Colonic mucosa (tissue), 4 donors: ENCODE measurements at regions of chr4 and their contacts with region 1.

Region 1: DNA sequence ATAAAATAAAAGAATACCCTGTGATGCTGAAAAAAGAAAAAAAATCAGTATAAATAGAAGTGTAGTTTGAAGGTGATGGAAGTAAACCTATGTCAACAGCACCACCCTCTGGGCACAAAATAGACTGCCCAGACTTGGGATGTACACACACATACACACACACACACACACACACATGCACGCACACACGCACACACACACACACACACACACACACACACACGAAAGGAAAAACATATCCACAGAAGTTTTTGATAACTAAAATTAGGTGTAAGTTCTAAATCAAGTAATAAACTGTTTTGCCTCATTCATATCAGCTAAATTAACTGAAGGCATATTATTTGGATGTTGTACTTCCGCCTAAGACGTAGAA is 40.5 kb downstream of the ANXA5 start:
- DNase-seq: no peak
- H3K4me3 ChIP-seq: no peak overlapping the region
- H3K27ac ChIP-seq: no peak overlapping the region
- H3K4me1 ChIP-seq: no peaks in the 10 kb centered on the region
- H3K27me3 ChIP-seq: no peaks in the 10 kb centered on the region
- CTCF ChIP-seq: no peak

Region 2: GRCh38 chr4:121370729-121371325 is 285.4 kb before region 1 on chr4:
- intact Hi-C with region 1: loop called (anchors 5 kb)
- DNase-seq: peak; percentile 32
- H3K4me3 ChIP-seq: no peak overlapping the region
- H3K27ac ChIP-seq: no peak overlapping the region
- H3K4me1 ChIP-seq: no peaks in the 10 kb centered on the region
- H3K27me3 ChIP-seq: no peaks in the 10 kb centered on the region
- CTCF ChIP-seq: peak; percentile 53

Region 3: DNA sequence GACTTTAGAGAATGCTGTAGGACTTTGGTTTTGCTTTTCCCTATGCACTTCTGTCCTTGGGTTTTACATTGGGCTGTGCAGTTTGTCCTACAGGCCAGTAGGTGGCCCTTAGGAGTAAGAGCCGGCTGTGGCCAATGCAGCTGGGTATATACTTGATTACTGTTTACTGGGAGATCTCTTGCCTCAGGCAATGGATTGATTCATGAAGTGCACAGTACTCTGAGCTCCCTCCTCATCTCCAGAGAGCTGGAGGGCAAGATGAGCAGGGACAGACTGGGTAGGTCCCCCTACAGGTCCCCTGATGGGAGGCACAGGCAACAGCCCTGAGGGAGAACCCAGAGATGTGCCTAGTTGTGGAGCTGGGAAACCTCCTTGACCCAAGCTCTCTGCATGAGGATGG is 171.6 kb before region 1 on chr4:
- intact Hi-C with region 1: loop called (anchors 10 kb)
- DNase-seq: no peak
- H3K4me3 ChIP-seq: no peak overlapping the region
- H3K27ac ChIP-seq: no peak overlapping the region
- H3K4me1 ChIP-seq: no peaks in the 10 kb centered on the region
- H3K27me3 ChIP-seq: no peaks in the 10 kb centered on the region
- CTCF ChIP-seq: peak; percentile 37

Region 4: GRCh38 chr4:121736735-121737351 is 80.6 kb after region 1 on chr4:
- intact Hi-C with region 1: no loop called
- DNase-seq: peak; percentile 25
- H3K4me3 ChIP-seq: no peak overlapping the region
- H3K27ac ChIP-seq: no peak overlapping the region
- H3K4me1 ChIP-seq: no peaks in the 10 kb centered on the region
- H3K27me3 ChIP-seq: no peaks in the 10 kb centered on the region
- CTCF ChIP-seq: peak; percentile 26